IMR-90 (cell line): ENCODE measurements at regions of chr3 and their contacts with region 1.

Region 1: GRCh38 chr3:120558771-120559241 is 37.3 kb upstream of the NDUFB4 start:
- DNase-seq: peak; percentile 84
- ATAC-seq: peak; percentile 73
- H3K4me3 ChIP-seq: peak overlapping the region; percentile 88
- H3K27ac ChIP-seq: peak overlapping the region; percentile 73
- H3K4me1 ChIP-seq: peaks cover 6% of the 10 kb centered on the region
- H3K27me3 ChIP-seq: no peaks in the 10 kb centered on the region
- CTCF ChIP-seq: peak; percentile 98
- POLR2A ChIP-seq: peak; percentile 51
- RAD21 ChIP-seq: peak; percentile 94

Region 2: GRCh38 chr3:120095226-120095978 is 463.4 kb before region 1 on chr3:
- CTCF ChIA-PET with region 1: no interaction called
- POLR2A ChIA-PET with region 1: no interaction called
- dilution Hi-C with region 1: no loop called
- in situ Hi-C with region 1: no loop called
- intact Hi-C with region 1: loop called (anchors 5 kb)
- DNase-seq: peak; percentile 89
- ATAC-seq: peak; percentile 52
- H3K4me3 ChIP-seq: peak overlapping the region; percentile 66
- H3K27ac ChIP-seq: peak overlapping the region; percentile 94
- H3K4me1 ChIP-seq: peaks cover 5% of the 10 kb centered on the region
- H3K27me3 ChIP-seq: no peaks in the 10 kb centered on the region
- CTCF ChIP-seq: no peak
- POLR2A ChIP-seq: peak; percentile 94
- RAD21 ChIP-seq: no peak

Region 3: DNA sequence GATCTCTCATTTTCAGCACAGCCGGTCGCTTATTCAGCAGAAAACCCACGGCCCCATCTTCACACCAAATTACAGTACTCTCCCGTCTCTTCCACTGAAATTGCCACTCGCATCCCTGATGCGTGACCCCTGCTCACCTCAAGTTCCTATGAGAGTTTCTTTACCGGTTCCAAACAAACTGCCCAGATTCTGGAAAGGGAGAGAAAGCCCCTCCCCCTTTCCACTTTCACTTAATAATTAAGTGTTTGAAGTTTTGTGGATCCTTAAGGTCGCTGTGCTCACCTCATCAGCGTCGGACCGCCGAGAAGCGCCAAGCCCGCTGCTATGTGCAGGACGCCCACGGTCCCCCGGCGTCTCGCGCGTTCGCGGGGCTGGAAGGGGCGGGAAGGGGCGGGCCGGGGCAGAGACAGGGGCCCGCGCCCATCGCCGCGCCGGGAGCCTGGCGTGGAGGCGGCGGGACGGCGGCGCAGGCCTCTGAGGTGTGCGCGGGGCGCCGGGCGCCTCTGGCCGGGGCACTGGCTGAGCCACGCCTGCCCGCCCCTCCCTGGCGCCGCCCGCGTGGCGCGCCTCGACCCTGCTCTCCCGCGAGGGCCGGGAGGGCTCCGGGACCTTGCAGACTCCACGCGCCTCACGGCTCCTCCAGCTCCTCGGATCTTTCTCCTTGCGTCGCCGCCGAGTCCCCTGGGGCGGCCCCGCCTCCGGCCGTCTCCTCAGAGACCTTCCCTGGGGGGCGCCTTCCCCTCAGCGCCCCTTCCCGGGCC is 273.9 kb before region 1 on chr3 and contains the start of gene GPR156:
- CTCF ChIA-PET with region 1: no interaction called
- POLR2A ChIA-PET with region 1: no interaction called
- dilution Hi-C with region 1: no loop called
- in situ Hi-C with region 1: no loop called
- intact Hi-C with region 1: no loop called
- DNase-seq: no peak
- ATAC-seq: peak; percentile 85
- H3K4me3 ChIP-seq: peak within 1 kb of the TSS; percentile 62
- H3K27ac ChIP-seq: no peak within 1 kb of the TSS
- H3K4me1 ChIP-seq: no peaks in the 10 kb centered on the region
- H3K27me3 ChIP-seq: peaks cover 62% of the 10 kb centered on the region
- CTCF ChIP-seq: 0 out of 2 replicates have a peak, but pooled peaks have one; percentile 5
- POLR2A ChIP-seq: no peak
- RAD21 ChIP-seq: no peak
- total RNA-seq, gene GPR156: 0.18 and 0.28 TPM in 2 replicates

Region 4: GRCh38 chr3:120348981-120349818 is 209.6 kb before region 1 on chr3 and contains the start of gene LRRC58:
- CTCF ChIA-PET with region 1: interaction called, 4 read pairs
- POLR2A ChIA-PET with region 1: no interaction called
- dilution Hi-C with region 1: no loop called
- in situ Hi-C with region 1: no loop called
- intact Hi-C with region 1: loop called (anchors 1 kb)
- DNase-seq: peak; percentile 91
- ATAC-seq: peak; percentile 95
- H3K4me3 ChIP-seq: peak within 1 kb of the TSS; percentile 80
- H3K27ac ChIP-seq: peak within 1 kb of the TSS; percentile 86
- H3K4me1 ChIP-seq: peaks cover 5% of the 10 kb centered on the region
- H3K27me3 ChIP-seq: peaks cover 5% of the 10 kb centered on the region; the same call in 1 of the 2 replicates
- CTCF ChIP-seq: peak; percentile 30
- POLR2A ChIP-seq: peak; percentile 77
- RAD21 ChIP-seq: no peak
- total RNA-seq, gene LRRC58: 13.4 and 21.7 TPM in 2 replicates

Region 5: GRCh38 chr3:120506828-120507774 is 51.7 kb before region 1 on chr3:
- CTCF ChIA-PET with region 1: interaction called, 4 read pairs
- POLR2A ChIA-PET with region 1: no interaction called
- dilution Hi-C with region 1: no loop called
- in situ Hi-C with region 1: no loop called
- intact Hi-C with region 1: loop called (anchors 5 kb)
- DNase-seq: peak; percentile 60
- ATAC-seq: peak; percentile 82
- H3K4me3 ChIP-seq: no peak overlapping the region
- H3K27ac ChIP-seq: no peak overlapping the region
- H3K4me1 ChIP-seq: peaks cover 4% of the 10 kb centered on the region; the same call in 1 of the 2 replicates
- H3K27me3 ChIP-seq: no peaks in the 10 kb centered on the region
- CTCF ChIP-seq: peak; percentile 64
- POLR2A ChIP-seq: no peak
- RAD21 ChIP-seq: peak; percentile 61

Region 6: GRCh38 chr3:120622870-120623731 is 64.3 kb after region 1 on chr3:
- CTCF ChIA-PET with region 1: no interaction called
- POLR2A ChIA-PET with region 1: no interaction called
- dilution Hi-C with region 1: no loop called
- in situ Hi-C with region 1: no loop called
- intact Hi-C with region 1: no loop called
- DNase-seq: peak; percentile 82
- ATAC-seq: peak; percentile 29; the same call in 1 of the 2 replicates
- H3K4me3 ChIP-seq: no peak overlapping the region
- H3K27ac ChIP-seq: no peak overlapping the region
- H3K4me1 ChIP-seq: no peaks in the 10 kb centered on the region
- H3K27me3 ChIP-seq: no peaks in the 10 kb centered on the region
- CTCF ChIP-seq: 0 out of 2 replicates have a peak, but pooled peaks have one; percentile 14
- POLR2A ChIP-seq: no peak
- RAD21 ChIP-seq: 0 out of 2 replicates have a peak, but pooled peaks have one; percentile 12

Region 7: GRCh38 chr3:120642368-120642948 is 83.7 kb after region 1 on chr3:
- CTCF ChIA-PET with region 1: no interaction called
- POLR2A ChIA-PET with region 1: no interaction called
- dilution Hi-C with region 1: no loop called
- in situ Hi-C with region 1: no loop called
- intact Hi-C with region 1: no loop called
- DNase-seq: peak; percentile 90
- ATAC-seq: peak; percentile 64
- H3K4me3 ChIP-seq: no peak overlapping the region
- H3K27ac ChIP-seq: 0 out of 2 replicates have a peak overlapping the region, but pooled peaks have one; percentile 5
- H3K4me1 ChIP-seq: peaks cover 20% of the 10 kb centered on the region
- H3K27me3 ChIP-seq: no peaks in the 10 kb centered on the region
- CTCF ChIP-seq: 0 out of 2 replicates have a peak, but pooled peaks have one; percentile 7
- POLR2A ChIP-seq: no peak
- RAD21 ChIP-seq: no peak

Region 8: GRCh38 chr3:120795017-120795648 is 236.3 kb after region 1 on chr3:
- CTCF ChIA-PET with region 1: interaction called, 20 read pairs
- POLR2A ChIA-PET with region 1: no interaction called
- dilution Hi-C with region 1: no loop called
- in situ Hi-C with region 1: loop called (anchors 5 kb)
- intact Hi-C with region 1: loop called (anchors 1 kb)
- DNase-seq: peak; percentile 82
- ATAC-seq: peak; percentile 79
- H3K4me3 ChIP-seq: no peak overlapping the region
- H3K27ac ChIP-seq: no peak overlapping the region
- H3K4me1 ChIP-seq: peaks cover 8% of the 10 kb centered on the region
- H3K27me3 ChIP-seq: no peaks in the 10 kb centered on the region
- CTCF ChIP-seq: peak; percentile 91
- POLR2A ChIP-seq: no peak
- RAD21 ChIP-seq: peak; percentile 87

Region 9: GRCh38 chr3:121482660-121483059 is 923.9 kb after region 1 on chr3:
- CTCF ChIA-PET with region 1: no interaction called
- POLR2A ChIA-PET with region 1: no interaction called
- dilution Hi-C with region 1: no loop called
- in situ Hi-C with region 1: loop called (anchors 25 kb)
- intact Hi-C with region 1: no loop called
- DNase-seq: peak; percentile 91
- ATAC-seq: peak; percentile 72
- H3K4me3 ChIP-seq: no peak overlapping the region
- H3K27ac ChIP-seq: no peak overlapping the region
- H3K4me1 ChIP-seq: peaks cover 10% of the 10 kb centered on the region
- H3K27me3 ChIP-seq: no peaks in the 10 kb centered on the region
- CTCF ChIP-seq: no peak
- POLR2A ChIP-seq: no peak
- RAD21 ChIP-seq: no peak